Natural killer cell (primary cell): ENCODE measurements at regions of chr10 and their contacts with region 1.

Region 1: GRCh38 chr10:59906417-59907202 is at the start of gene CCDC6:
- DNase-seq: peak; percentile 87 to 95
- ATAC-seq: peak; percentile 86 to 94 (median 89)
- H3K4me3 ChIP-seq: peak within 1 kb of the TSS; percentile 95
- H3K4me3 Mint-ChIP-seq: peak within 1 kb of the TSS; percentile 98
- H3K27ac ChIP-seq: peak within 1 kb of the TSS; percentile 95
- H3K27ac Mint-ChIP-seq: peak within 1 kb of the TSS; percentile 91 to 96
- H3K4me1 ChIP-seq: peaks cover 22% of the 10 kb centered on the region
- H3K4me1 Mint-ChIP-seq: peaks cover 49 to 56% of the 10 kb centered on the region in 2 donors
- H3K27me3 ChIP-seq: no peaks in the 10 kb centered on the region
- H3K27me3 Mint-ChIP-seq: no peaks in the 10 kb centered on the region
- CTCF ChIP-seq: peak; percentile 66
- total RNA-seq, gene CCDC6: 19.7 to 23.4 (median 20.8) TPM

Region 2: DNA sequence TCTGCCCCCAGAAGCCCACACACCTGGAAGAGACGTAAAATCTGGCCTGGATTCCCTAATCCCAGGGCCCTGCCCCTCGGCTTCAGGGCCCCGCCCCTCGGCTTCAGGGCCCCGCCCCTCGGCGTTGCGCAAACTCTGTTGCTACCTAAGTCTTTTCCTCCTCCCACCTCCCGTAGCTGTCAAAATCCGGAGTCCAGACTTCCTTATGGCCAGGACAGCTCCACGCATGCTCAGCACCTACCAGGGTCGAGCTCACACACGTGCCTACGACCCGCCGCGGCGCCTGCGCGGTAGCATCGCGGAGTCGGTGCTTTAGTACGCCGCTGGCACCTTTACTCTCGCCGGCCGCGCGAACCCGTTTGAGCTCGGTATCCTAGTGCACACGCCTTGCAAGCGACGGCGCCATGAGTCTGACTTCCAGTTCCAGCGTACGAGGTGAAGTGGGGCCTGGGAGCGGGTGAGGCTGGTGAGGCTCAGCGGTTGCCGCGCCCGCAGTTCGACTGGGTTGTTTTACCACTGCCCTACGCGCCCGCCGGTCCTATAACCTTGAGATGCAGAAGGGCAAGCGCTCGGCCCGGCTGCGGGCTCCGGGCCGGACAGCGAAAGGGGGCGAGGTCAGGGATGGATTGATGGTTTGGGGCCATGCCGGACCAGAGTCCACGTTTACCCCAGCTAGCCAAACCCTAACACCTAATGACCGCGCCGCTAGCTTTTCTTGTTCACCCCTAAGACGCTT is 1637.6 kb before region 1 on chr10 and contains the start of gene CISD1:
- intact Hi-C with region 1: loop called (anchors 5 kb)
- DNase-seq: peak; percentile 82 to 100
- ATAC-seq: peak; percentile 54 to 71 (median 69)
- H3K4me3 ChIP-seq: peak within 1 kb of the TSS; percentile 68
- H3K4me3 Mint-ChIP-seq: peak within 1 kb of the TSS; percentile 96
- H3K27ac ChIP-seq: peak within 1 kb of the TSS; percentile 90
- H3K27ac Mint-ChIP-seq: peak within 1 kb of the TSS; percentile 96 to 99
- H3K4me1 ChIP-seq: peaks cover 21% of the 10 kb centered on the region
- H3K4me1 Mint-ChIP-seq: peaks cover 50 to 52% of the 10 kb centered on the region in 2 donors
- H3K27me3 ChIP-seq: no peaks in the 10 kb centered on the region
- H3K27me3 Mint-ChIP-seq: no peaks in the 10 kb centered on the region
- CTCF ChIP-seq: no peak
- total RNA-seq, gene CISD1: 4.2 to 10.4 (median 5.3) TPM

Region 3: GRCh38 chr10:59865101-59865500 is 41.5 kb before region 1 on chr10:
- intact Hi-C with region 1: loop called (anchors 1 kb)
- DNase-seq: peak in 1 of 2 donors; percentile 58
- ATAC-seq: peak in 2 of 3 donors; percentile 54 to 67
- H3K4me3 ChIP-seq: no peak overlapping the region
- H3K4me3 Mint-ChIP-seq: no peak overlapping the region
- H3K27ac ChIP-seq: no peak overlapping the region
- H3K27ac Mint-ChIP-seq: peak overlapping the region in 1 of 2 donors; percentile 23
- H3K4me1 ChIP-seq: peaks cover 11% of the 10 kb centered on the region
- H3K4me1 Mint-ChIP-seq: peaks cover 52 to 57% of the 10 kb centered on the region in 2 donors
- H3K27me3 ChIP-seq: no peaks in the 10 kb centered on the region
- H3K27me3 Mint-ChIP-seq: no peaks in the 10 kb centered on the region
- CTCF ChIP-seq: peak; percentile 42

Region 4: GRCh38 chr10:59880971-59881510 is 25.6 kb before region 1 on chr10:
- intact Hi-C with region 1: loop called (anchors 1 kb)
- DNase-seq: peak; percentile 45 to 68
- ATAC-seq: peak; percentile 80 to 97 (median 93)
- H3K4me3 ChIP-seq: no peak overlapping the region
- H3K4me3 Mint-ChIP-seq: peak overlapping the region; percentile 49
- H3K27ac ChIP-seq: no peak overlapping the region
- H3K27ac Mint-ChIP-seq: peak overlapping the region; percentile 73 to 80
- H3K4me1 ChIP-seq: peaks cover 30% of the 10 kb centered on the region
- H3K4me1 Mint-ChIP-seq: peaks cover 74 to 75% of the 10 kb centered on the region in 2 donors
- H3K27me3 ChIP-seq: no peaks in the 10 kb centered on the region
- H3K27me3 Mint-ChIP-seq: no peaks in the 10 kb centered on the region
- CTCF ChIP-seq: no peak

Region 5: DNA sequence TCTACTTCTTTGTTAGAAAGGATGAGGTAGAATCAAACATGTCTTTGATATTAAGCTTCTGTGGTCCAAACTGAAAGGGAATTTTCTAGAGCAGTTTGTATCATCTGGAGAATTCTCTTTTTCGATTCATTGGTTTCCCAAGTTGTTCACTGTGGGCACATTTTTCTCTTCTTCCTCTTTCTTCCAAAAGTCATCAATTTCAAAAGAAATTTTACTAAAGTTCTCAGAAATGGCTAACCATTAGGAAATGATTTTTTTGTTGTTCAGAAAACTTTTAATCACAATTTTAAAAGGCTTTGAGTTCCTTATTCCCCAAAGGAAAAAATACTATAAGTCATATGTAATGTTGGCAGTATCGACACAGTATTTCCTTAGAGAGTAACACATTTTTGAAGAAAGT is 28.1 kb after region 1 on chr10:
- intact Hi-C with region 1: no loop called
- DNase-seq: no peak
- ATAC-seq: no peak
- H3K4me3 ChIP-seq: no peak overlapping the region
- H3K4me3 Mint-ChIP-seq: no peak overlapping the region
- H3K27ac ChIP-seq: no peak overlapping the region
- H3K27ac Mint-ChIP-seq: no peak overlapping the region
- H3K4me1 ChIP-seq: no peaks in the 10 kb centered on the region
- H3K4me1 Mint-ChIP-seq: no peaks in the 10 kb centered on the region
- H3K27me3 ChIP-seq: no peaks in the 10 kb centered on the region
- H3K27me3 Mint-ChIP-seq: peaks cover 2 to 16% of the 10 kb centered on the region in 2 donors
- CTCF ChIP-seq: no peak

Region 6: DNA sequence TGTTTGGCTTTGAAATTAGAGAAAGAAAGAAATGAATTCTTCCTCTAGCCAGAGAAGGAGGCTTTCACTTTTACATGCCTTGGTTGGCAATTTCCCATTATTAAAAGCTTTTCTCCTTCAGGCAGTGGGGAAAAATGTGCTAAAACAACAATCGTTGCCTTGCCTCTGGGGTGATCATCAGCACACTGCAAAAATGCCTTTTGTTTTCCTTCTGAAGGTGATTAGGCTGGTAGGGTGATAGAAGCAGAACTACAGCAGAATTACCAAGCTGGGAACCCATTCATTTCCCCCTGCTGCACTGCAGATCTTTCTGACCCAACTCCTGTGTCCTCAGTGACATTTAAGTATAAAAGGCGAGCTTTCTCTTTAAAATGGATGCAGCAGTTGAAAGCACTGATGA is 460.8 kb after region 1 on chr10:
- intact Hi-C with region 1: no loop called
- DNase-seq: no peak
- ATAC-seq: no peak
- H3K4me3 ChIP-seq: no peak overlapping the region
- H3K4me3 Mint-ChIP-seq: no peak overlapping the region
- H3K27ac ChIP-seq: no peak overlapping the region
- H3K27ac Mint-ChIP-seq: no peak overlapping the region
- H3K4me1 ChIP-seq: no peaks in the 10 kb centered on the region
- H3K4me1 Mint-ChIP-seq: no peaks in the 10 kb centered on the region
- H3K27me3 ChIP-seq: no peaks in the 10 kb centered on the region
- H3K27me3 Mint-ChIP-seq: no peaks in the 10 kb centered on the region
- CTCF ChIP-seq: no peak

Region 7: DNA sequence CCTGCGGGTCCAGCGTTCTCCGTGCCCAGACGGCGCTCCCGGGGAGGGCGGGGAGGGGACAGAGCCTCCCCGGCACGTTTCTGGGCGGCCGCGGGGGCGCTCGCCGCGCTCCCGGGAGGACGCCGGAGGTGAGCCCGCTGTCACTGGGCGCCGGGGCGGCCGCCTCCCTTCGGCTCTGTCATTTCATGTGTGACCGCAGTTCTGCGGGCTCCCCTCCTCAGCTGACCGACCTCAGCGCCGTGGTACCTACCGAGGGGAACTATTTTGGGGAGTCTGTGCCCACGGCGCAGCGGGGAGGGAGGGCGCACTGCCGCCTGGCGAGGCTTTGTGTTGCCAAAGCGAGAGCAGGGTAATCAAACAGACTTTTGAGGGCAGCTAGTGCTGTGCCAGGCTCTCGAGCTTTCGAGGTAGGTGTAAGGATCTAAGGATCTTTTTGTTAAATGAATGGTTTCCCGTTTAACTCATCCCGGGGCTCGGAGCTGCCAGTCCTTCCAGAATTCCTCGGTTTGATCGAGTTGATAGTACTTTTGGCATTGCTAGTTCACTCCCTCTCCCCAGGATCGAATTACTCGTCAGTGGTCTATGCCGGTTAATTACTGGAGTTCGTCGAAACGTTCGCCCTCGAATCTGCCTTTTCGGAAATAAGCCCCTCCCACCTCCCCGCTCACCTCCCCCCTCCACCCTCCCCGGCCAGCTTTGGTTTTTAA is 1996.8 kb after region 1 on chr10:
- intact Hi-C with region 1: loop called (anchors 5 kb)
- DNase-seq: peak; percentile 68 to 81
- ATAC-seq: peak; percentile 46 to 72 (median 64)
- H3K4me3 ChIP-seq: peak overlapping the region; percentile 81
- H3K4me3 Mint-ChIP-seq: peak overlapping the region; percentile 93
- H3K27ac ChIP-seq: peak overlapping the region; percentile 92
- H3K27ac Mint-ChIP-seq: peak overlapping the region; percentile 87 to 89
- H3K4me1 ChIP-seq: peaks cover 3% of the 10 kb centered on the region
- H3K4me1 Mint-ChIP-seq: peaks cover 57 to 60% of the 10 kb centered on the region in 2 donors
- H3K27me3 ChIP-seq: no peaks in the 10 kb centered on the region
- H3K27me3 Mint-ChIP-seq: no peaks in the 10 kb centered on the region
- CTCF ChIP-seq: peak; percentile 16